ENCODE measurements at regions of chr17 and their contacts with region 1.

Region 1: DNA sequence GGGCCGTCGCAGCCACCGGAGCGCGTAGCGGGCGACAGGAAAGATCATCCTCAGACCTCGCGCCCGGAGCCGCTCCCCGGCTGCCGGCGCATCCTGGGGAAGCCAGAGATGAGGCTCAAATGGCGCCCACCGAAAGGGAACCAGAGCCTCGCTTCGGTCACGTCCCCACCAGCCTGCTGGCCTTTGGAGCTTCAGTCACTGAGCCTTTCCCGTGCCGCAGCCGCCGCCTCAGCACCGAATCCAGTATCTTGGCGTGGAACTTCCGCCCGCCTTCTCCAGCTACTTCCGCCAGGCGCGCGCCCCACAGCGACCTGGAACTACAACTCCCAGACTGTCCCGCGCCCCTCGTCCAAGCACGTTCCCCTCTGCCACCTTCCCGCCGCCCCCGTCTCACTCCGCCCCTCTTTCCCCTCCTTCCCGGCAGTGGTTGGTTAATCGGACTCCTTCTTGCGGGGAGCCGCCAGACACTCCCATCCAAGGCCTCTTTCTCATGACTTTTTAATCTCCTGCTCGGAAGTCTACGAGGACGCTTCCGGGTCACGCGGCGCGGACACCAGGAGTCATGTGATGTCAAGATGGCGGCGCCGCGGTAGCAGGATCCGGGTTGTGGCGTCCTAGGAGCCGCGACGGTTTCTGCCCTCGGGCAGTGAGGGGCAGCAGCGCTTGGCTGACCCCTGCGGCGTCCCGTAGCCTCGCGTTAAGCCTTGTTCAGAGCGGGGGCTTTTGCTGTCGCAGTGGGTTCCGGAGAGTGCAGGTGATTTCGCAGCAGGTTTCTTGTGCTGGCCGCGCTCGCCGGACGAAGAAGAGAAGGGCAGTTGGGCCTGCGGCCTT is at the starts of genes SMCR8 and TOP3A:
- DNase-seq: peak; percentile 95 to 99 (median 97)
- ATAC-seq: peak; percentile 95
- H3K4me3 ChIP-seq: peak within 1 kb of the TSS; percentile 88 to 93
- H3K4me3 Mint-ChIP-seq: peak within 1 kb of the TSS; percentile 90
- H3K27ac ChIP-seq: peak within 1 kb of the TSS; percentile 98 to 99
- H3K27ac Mint-ChIP-seq: peak within 1 kb of the TSS; percentile 97
- H3K4me1 ChIP-seq: peaks cover 67% of the 10 kb centered on the region
- H3K4me1 Mint-ChIP-seq: peaks cover 76% of the 10 kb centered on the region
- H3K27me3 ChIP-seq: no peaks in the 10 kb centered on the region
- H3K27me3 Mint-ChIP-seq: no peaks in the 10 kb centered on the region
- CTCF ChIP-seq: no peak
- total RNA-seq, gene SMCR8: 51.9 to 53.1 TPM
- total RNA-seq, gene TOP3A: 28.8 to 30.9 TPM

Region 2: DNA sequence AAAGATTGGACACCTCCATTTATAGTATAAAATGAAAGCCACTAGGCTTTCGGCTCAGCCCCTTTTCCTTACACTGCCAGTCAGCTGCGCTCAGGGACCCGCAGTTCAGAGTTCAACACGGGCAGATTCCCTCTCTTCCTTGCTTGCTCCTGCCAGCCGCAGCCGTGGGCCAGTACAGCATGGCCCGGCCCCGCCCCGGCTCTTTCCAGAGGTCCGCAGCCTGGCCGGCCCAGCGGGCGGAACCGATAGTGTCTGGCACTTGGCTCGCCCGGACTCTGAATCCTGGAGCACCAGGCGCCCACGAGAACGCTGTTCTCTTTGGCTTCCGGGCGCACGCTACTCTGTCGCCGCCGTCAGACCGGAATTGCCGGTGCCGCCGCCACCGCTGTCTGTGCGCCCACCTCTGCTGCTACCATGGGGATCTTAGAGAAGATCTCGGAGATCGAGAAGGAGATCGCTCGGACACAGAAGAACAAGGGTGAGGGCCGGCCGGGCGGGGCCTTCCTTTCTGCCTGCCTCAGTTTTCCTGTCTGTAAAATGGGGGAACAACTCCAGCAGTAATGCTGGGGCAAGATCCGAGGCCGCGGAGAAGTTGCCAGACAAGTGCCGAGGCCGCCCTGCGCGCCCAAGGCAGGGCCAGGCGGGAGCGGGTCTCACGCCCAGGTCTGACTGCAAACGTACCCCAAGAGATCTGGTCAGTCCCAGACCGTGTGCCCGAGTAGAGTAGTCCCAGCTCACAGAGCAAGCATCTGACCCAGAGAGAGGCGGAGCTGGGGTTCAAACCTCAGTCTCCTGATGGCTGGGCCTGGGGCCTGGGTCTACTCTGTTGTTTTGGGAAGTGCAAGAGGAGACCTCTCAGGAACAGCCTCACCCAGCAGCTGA is 227.1 kb before region 1 on chr17 and contains the start of gene DRG2:
- CTCF ChIA-PET with region 1: no interaction called
- POLR2A ChIA-PET with region 1: no interaction called
- intact Hi-C with region 1: loop called (anchors 2 to 5 kb)
- DNase-seq: peak; percentile 79 to 94 (median 88)
- ATAC-seq: peak; percentile 91
- H3K4me3 ChIP-seq: peak within 1 kb of the TSS; percentile 80 to 90
- H3K4me3 Mint-ChIP-seq: peak within 1 kb of the TSS; percentile 99
- H3K27ac ChIP-seq: peak within 1 kb of the TSS; percentile 78 to 87
- H3K27ac Mint-ChIP-seq: peak within 1 kb of the TSS; percentile 98
- H3K4me1 ChIP-seq: peaks cover 15% of the 10 kb centered on the region
- H3K4me1 Mint-ChIP-seq: peaks cover 33% of the 10 kb centered on the region
- H3K27me3 ChIP-seq: no peaks in the 10 kb centered on the region
- H3K27me3 Mint-ChIP-seq: no peaks in the 10 kb centered on the region
- CTCF ChIP-seq: no peak
- total RNA-seq, gene DRG2: 45.4 to 46.3 TPM

Region 3: DNA sequence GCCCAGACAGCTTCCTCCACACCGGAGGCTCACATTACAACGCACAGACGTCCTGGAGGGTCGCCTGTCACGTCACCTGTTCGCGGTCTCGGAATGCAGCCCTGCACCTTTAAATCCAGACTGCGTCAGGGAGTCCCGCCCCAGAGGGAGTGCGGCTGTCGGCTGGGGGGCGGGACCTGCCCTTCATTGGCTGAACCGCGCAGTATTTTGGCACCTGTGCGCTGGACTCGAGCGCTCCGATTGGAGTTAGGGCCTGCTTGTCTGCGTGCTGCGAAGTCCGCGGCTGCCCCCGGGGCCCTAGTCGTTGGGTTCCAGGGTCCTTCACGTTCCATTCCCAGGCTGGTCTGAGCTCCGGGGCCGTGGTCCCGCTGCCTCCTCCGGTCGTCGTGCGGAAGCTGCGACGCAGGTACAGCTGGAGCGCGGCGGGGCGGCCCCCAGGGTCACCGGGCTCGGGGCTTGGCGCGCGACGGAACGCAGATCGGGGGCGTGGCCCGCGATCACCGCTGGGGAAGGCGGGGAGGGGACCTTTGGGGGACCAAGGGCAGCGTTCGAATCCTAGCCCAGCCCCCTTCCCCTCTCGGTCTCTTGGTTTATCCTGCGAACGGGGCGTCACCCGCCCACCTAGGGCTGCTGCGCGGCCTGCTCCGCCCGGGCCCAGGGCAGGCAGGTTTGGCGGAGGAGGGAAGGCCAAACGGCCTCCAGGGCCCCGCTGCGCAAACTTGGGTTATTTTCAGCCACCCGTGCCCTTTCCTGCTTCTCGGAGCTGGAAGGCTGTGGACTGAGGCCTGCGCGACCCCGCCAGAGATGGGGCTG is 54.4 kb before region 1 on chr17 and contains the start of gene MIEF2:
- CTCF ChIA-PET with region 1: no interaction called
- POLR2A ChIA-PET with region 1: interaction called, 3 read pairs
- intact Hi-C with region 1: loop called (anchors 1 kb)
- DNase-seq: peak; percentile 83 to 95 (median 93)
- ATAC-seq: peak; percentile 87
- H3K4me3 ChIP-seq: peak within 1 kb of the TSS; percentile 62 to 78
- H3K4me3 Mint-ChIP-seq: peak within 1 kb of the TSS; percentile 78
- H3K27ac ChIP-seq: peak within 1 kb of the TSS; percentile 83 to 93
- H3K27ac Mint-ChIP-seq: peak within 1 kb of the TSS; percentile 92
- H3K4me1 ChIP-seq: peaks cover 47% of the 10 kb centered on the region
- H3K4me1 Mint-ChIP-seq: peaks cover 43% of the 10 kb centered on the region
- H3K27me3 ChIP-seq: no peaks in the 10 kb centered on the region
- H3K27me3 Mint-ChIP-seq: no peaks in the 10 kb centered on the region
- CTCF ChIP-seq: no peak
- total RNA-seq, gene MIEF2: 9.6 to 11.0 TPM

Region 4: GRCh38 chr17:18363101-18364049 is 48.4 kb after region 1 on chr17 and contains the start of gene SHMT1:
- CTCF ChIA-PET with region 1: no interaction called
- POLR2A ChIA-PET with region 1: interaction called, 6 read pairs
- intact Hi-C with region 1: loop called (anchors 1 kb)
- DNase-seq: peak; percentile 73 to 95 (median 89)
- ATAC-seq: peak; percentile 100
- H3K4me3 ChIP-seq: peak within 1 kb of the TSS; percentile 75 to 93
- H3K4me3 Mint-ChIP-seq: peak within 1 kb of the TSS; percentile 93
- H3K27ac ChIP-seq: peak within 1 kb of the TSS; percentile 45 to 65
- H3K27ac Mint-ChIP-seq: peak within 1 kb of the TSS; percentile 72
- H3K4me1 ChIP-seq: peaks cover 9% of the 10 kb centered on the region
- H3K4me1 Mint-ChIP-seq: peaks cover 20% of the 10 kb centered on the region
- H3K27me3 ChIP-seq: no peaks in the 10 kb centered on the region
- H3K27me3 Mint-ChIP-seq: no peaks in the 10 kb centered on the region
- CTCF ChIP-seq: no peak
- total RNA-seq, gene SHMT1: 5.7 to 6.1 TPM